ENCODE measurements at regions of chr19 and their contacts with region 1.

Region 1: DNA sequence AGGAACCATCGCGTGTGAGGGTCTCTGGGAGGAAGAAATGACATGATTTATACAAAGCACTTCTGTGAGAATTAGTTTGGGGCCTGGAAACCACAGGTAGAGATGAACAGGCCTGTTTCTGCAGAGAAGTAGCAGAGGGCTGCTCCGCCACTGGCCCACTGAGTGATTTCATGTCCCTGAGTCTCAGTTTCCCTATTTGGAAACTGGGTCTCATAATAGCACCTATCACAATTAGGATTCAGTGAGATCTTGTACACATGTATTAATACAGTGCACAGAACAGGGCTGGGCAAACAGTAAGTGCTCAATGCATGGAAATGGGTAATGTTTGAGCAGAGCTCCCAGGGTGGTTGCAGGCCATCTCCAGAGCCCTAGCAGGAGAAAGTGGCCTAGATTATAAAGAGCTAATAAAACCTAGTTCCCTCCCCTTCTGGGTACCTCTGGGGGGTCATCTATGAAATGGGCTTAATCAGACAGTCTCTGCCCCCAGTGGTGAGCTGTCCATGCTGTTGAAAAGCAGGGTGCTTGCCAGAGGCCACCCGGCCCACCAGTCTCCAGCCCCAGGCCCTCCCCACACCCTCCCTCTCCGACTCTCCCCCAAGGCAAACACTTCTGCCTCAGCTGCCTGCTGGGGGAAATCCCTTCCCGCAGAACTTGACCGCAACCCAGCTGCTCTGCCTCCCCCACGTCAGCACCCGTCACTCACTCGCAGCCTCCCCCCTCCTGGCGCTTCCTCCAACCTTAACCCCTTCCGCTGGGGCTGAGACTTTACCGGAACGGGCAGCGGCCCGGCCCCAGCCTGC is 4.5 kb downstream of the BCL3 start:
- DNase-seq: peak; percentile 99
- H3K4me3 Mint-ChIP-seq: peak overlapping the region; percentile 95
- H3K27ac Mint-ChIP-seq: peak overlapping the region; percentile 84
- H3K4me1 Mint-ChIP-seq: peaks cover 62% of the 10 kb centered on the region
- H3K27me3 Mint-ChIP-seq: peaks cover 2% of the 10 kb centered on the region

Region 2: GRCh38 chr19:44723952-44724319 is 29.1 kb before region 1 on chr19:
- intact Hi-C with region 1: loop called (anchors 2 kb)
- DNase-seq: peak; percentile 95
- H3K4me3 Mint-ChIP-seq: peak overlapping the region; percentile 40
- H3K27ac Mint-ChIP-seq: peak overlapping the region; percentile 45
- H3K4me1 Mint-ChIP-seq: peaks cover 46% of the 10 kb centered on the region
- H3K27me3 Mint-ChIP-seq: no peaks in the 10 kb centered on the region

Region 3: DNA sequence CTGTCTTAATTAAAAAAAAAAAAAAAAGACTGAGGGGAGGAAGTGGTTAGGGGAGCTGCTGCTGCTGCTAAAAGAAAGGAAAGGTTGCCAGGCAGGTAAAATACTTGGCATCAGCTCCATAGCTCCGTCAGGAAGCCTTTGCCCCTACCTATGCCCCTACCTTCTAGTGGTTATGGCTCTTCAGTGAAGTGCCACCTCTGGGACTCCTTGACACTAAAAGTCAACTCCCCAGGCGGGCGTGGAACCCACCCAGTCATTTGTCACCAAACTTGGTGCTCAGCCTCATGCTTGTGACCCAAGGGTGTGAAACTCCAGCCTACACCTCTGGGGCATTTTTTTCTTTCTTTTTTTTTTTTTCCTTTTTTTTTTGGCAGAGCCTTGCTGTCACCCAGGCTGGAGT is 88.2 kb after region 1 on chr19:
- intact Hi-C with region 1: no loop called
- DNase-seq: peak; percentile 61
- H3K4me3 Mint-ChIP-seq: no peak overlapping the region
- H3K27ac Mint-ChIP-seq: no peak overlapping the region
- H3K4me1 Mint-ChIP-seq: peaks cover 11% of the 10 kb centered on the region
- H3K27me3 Mint-ChIP-seq: peaks cover 11% of the 10 kb centered on the region

Region 4: GRCh38 chr19:44890366-44891015 is 137.5 kb after region 1 on chr19:
- intact Hi-C with region 1: loop called (anchors 2 kb)
- DNase-seq: peak; percentile 100
- H3K4me3 Mint-ChIP-seq: peak overlapping the region; percentile 84
- H3K27ac Mint-ChIP-seq: peak overlapping the region; percentile 97
- H3K4me1 Mint-ChIP-seq: peaks cover 25% of the 10 kb centered on the region
- H3K27me3 Mint-ChIP-seq: no peaks in the 10 kb centered on the region

Measured in activated CD4-positive, alpha-beta T cell treated with anti-CD3 and anti-CD28 coated beads, Interleukin-2, amount 10 ng/mL, durations not matched to agents 24 days and 14 days (primary cell).